ENCODE measurements at regions of chr2 and their contacts with region 1.

Region 1: GRCh38 chr2:98378930-98379671 is 32.8 kb downstream of the CNGA3 start:
- DNase-seq: no peak
- ATAC-seq: peak; percentile 35 to 80 (median 64)
- H3K4me3 ChIP-seq: no peak overlapping the region
- H3K27ac ChIP-seq: no peak overlapping the region
- H3K4me1 ChIP-seq: no peaks in the 10 kb centered on the region
- H3K27me3 ChIP-seq: peaks cover 0 to 2% (median 0%) of the 10 kb centered on the region in 3 donors
- CTCF ChIP-seq: no peak

Region 2: GRCh38 chr2:98269830-98270229 is 109.3 kb before region 1 on chr2:
- intact Hi-C with region 1: loop called in 1 of 2 experiments (anchors 10 kb)
- DNase-seq: no peak
- ATAC-seq: no peak
- H3K4me3 ChIP-seq: no peak overlapping the region
- H3K27ac ChIP-seq: no peak overlapping the region
- H3K4me1 ChIP-seq: no peaks in the 10 kb centered on the region
- H3K27me3 ChIP-seq: no peaks in the 10 kb centered on the region
- CTCF ChIP-seq: no peak

Region 3: DNA sequence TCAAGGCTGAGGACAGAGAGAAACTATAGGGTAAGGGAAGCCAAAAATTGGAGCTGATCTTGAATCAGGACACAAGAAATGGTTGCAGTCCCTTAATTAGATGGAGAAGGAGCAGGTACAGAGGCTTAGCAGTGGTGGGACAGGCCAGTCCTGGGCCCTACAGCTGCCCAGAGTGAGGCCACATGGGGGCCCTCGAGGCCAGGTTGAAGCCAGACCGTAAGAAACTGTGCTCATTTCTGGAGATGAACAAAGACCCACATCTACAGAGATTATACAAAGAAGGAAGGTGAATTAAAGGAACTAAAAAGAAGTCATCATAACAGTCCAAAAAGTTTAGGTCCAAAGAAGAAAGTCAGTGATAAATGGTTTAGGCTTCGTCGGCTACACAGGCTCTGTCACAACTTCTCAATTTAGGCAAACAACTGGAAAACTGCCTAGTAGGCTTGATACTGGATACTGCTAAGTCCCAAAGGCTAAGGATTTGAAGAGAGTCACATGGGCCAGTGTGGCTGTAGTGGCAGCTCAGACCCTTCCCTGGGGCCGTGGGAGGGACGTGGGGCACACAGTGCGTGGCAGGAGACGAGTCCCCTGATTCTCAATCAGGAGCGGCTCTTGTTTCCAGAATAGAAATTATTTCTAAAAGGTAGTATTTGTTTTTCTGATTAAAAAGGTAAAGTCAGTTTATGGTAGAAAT is 83.2 kb before region 1 on chr2:
- intact Hi-C with region 1: no loop called
- DNase-seq: no peak
- ATAC-seq: no peak
- H3K4me3 ChIP-seq: no peak overlapping the region
- H3K27ac ChIP-seq: no peak overlapping the region
- H3K4me1 ChIP-seq: no peaks in the 10 kb centered on the region
- H3K27me3 ChIP-seq: no peaks in the 10 kb centered on the region
- CTCF ChIP-seq: no peak